Ovary (tissue), 10 donors: ENCODE measurements at regions of chr9 and their contacts with region 1.

Region 1: DNA sequence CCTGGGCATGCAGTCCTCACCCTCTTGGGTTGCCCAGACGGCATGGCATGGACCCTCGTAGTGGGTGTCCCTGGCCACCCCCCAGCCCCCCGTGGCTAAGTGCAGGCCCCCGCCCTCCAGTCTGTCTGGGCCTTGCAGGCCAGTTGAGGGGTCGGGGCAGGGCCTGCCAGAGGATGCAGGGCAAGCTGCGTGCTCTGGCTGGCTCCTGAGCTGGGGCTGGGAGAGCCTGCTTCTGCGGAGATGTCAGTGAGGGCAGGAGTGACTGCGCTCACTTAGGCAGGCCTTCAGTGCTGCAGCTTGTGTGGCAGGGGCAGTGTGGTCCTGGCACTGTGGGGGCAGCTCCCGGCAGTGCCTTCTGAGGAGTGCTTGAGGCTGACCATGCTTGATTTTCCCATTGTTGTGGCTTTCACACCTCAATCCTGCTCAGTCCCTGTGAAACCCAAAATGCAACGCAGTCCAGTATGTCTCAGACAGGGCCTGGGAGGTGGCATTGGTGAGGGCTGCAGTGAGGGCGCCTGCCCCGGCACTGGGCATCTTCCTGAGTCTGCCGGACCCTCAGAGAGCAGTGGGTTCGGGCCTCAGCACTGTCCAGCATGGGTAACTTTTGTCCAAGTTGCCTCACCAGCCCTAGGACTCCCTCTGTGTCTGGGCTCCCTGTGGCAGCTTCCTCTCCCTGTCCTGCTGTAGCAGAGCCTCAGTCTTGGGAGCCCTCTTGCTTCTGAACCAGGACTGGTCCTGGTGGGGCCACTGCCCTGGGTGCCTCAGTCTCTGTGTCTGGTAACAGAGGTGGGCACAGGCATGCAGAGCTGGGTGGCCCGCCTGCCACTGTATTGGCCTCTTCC is 93.0 kb downstream of the PHF2 start:
- DNase-seq: peak; percentile 5 to 23 (median 10)
- H3K4me3 ChIP-seq: no peak overlapping the region
- H3K27ac ChIP-seq: no peak overlapping the region
- H3K4me1 ChIP-seq: no peaks in the 10 kb centered on the region
- H3K27me3 ChIP-seq: no peaks in the 10 kb centered on the region
- CTCF ChIP-seq: no peak
- EP300 ChIP-seq: no peak
- POLR2A ChIP-seq: no peak

Region 2: DNA sequence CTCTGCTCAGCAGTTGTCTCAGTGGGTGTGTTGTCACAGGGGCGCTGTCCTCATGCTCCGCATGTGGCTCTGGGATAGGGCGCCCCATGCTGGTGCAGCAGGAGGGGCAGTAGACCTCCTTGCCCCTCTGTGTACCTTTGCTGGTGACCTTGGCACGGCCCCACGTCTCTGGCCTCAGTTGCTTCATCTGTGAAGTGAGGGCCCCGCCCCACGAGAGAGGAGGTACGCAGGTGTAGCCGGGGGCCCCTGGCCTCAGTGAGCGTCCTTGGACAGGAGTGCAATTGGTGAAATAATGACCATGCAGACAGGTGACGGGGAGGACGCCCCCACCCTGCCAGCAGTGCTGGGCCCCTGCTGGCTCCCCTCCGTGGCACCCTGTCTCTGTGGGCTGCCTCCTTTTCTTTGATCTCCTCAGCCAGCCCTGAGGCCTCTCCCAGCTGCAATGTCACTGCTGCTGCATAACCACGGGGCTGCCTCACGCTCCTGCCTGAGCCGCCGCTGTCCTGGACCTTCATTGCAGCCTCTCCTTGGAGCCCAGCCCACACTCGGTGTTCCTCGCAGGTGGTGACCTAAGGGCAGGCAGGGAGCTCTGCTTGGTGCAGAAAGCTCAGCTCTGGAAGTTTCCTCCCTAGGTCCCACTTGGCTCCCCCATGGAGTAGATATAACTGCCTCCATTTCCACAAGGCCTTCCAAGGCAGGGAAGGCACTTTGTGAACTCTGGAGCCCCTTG is 35.7 kb before region 1 on chr9:
- intact Hi-C with region 1: no loop called
- DNase-seq: peak in 1 of 5 donors; percentile 13
- H3K4me3 ChIP-seq: no peak overlapping the region
- H3K27ac ChIP-seq: no peak overlapping the region
- H3K4me1 ChIP-seq: no peaks in the 10 kb centered on the region
- H3K27me3 ChIP-seq: no peaks in the 10 kb centered on the region
- CTCF ChIP-seq: no peak
- EP300 ChIP-seq: no peak
- POLR2A ChIP-seq: no peak

Region 3: DNA sequence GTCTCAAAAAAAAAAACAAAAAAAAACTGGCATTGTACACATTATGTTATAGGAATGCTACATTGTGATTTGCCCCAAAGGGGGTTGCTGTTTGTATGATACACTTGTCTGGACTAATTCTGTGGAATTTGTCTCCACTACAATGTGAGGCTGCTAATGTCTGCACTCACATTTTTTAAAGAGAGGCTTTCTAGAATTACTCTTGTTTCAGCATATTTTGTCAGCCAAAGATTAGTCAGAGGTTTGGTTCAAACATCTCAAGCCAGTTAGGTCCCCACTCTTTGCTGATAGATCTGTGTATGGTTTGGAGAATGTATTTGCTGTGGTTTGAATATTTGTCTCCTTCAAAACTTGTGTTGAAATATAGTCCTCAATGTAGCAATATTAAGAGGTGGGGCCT is 530.4 kb after region 1 on chr9:
- intact Hi-C with region 1: loop called in 1 of 4 experiments (anchors 10 kb)
- DNase-seq: no peak
- H3K4me3 ChIP-seq: no peak overlapping the region
- H3K27ac ChIP-seq: no peak overlapping the region
- H3K4me1 ChIP-seq: no peaks in the 10 kb centered on the region
- H3K27me3 ChIP-seq: no peaks in the 10 kb centered on the region
- CTCF ChIP-seq: no peak
- EP300 ChIP-seq: no peak
- POLR2A ChIP-seq: no peak